PC-9 (cell line): ENCODE measurements at regions of chr5 and their contacts with region 1.

Region 1: DNA sequence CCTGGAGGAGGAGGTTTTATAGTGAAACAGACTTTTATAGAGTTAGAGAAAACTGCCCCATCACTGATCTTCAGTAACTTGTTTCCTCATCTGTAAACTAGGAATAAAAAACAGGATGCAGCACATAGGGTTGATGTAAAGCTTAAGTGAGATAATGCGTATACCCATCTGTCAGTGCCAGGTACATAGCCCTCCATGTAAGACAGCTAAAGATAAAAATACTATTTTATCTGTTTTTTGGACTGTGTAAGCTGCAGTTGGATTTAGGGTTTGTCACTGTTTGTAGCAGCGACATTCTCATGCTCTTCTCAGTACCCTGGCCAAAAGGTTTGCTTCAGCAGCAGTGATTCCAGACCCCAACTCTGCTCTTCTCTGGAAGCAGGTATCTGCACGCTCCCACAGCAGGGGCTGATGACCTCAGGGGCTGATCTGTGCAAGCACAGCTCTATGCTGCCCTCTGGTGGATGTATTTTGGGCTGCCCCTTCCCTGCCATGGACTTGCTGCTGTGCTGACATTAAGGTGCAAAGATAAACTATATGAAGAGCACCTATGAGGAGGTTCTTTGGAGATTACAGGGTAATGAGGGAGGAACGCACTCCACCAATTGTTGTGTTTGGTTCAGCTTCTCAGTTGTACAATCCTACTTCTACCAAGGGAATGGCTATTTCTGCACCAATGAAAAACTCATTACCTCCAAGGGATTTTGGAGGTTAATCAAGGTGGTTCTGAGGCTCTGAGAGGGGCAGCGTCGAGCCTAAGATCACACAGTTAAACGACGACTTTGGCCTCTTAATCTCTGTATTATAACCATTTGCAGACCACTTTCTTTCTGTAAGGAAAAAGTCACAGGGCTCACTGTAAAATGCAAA is 13.1 kb downstream of the HMHB1 start:
- DNase-seq: peak; percentile 42 to 79
- H3K4me3 ChIP-seq: no peak overlapping the region
- H3K27ac ChIP-seq: no peak overlapping the region
- H3K4me1 ChIP-seq: peaks cover 15% of the 10 kb centered on the region
- H3K27me3 ChIP-seq: no peaks in the 10 kb centered on the region
- CTCF ChIP-seq: peak; percentile 97

Region 2: DNA sequence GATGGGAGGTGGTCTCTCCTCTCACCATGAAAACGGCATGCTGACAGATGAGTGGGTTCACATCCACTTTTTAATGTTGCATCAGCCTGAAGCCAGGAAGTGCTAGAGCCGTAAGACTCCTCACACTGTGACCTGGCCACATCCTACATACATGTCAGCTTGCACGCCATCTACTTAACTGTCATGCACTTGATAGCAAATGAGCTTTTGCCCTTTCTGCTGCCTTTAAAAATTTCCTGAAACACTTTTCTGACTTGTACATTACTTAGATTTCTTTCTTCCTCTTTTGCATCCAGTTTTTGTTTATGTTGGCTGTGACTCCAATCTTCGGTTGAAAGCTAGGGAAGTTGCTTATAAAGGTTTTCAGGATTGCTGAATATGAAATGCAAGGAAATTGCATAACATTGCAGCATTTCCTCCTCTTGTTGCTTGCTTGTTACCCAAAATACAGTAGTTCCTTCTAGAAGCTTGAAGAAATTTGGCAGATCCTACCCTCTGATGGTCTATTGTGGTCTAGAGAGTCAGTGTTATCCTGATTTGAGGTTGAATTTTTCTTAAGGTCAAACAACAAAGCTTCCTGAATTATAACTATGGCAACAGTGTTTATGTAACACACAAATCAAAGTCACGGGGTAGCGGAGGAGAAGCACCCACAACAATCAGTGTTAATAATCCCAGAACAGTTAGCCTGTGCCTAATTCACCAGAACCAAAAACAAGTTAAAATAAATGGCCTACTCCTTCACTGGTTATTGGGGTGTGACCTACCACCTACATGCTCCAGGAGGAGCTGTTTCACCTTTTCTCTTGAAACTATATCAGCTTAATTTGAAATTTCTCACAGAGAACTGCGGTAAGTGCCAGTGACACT is 822.4 kb before region 1 on chr5:
- CTCF ChIA-PET with region 1: interaction called, 4 read pairs
- POLR2A ChIA-PET with region 1: no interaction called
- intact Hi-C with region 1: loop called (anchors 5 kb)
- DNase-seq: no peak
- H3K4me3 ChIP-seq: no peak overlapping the region
- H3K27ac ChIP-seq: no peak overlapping the region
- H3K4me1 ChIP-seq: no peaks in the 10 kb centered on the region
- H3K27me3 ChIP-seq: no peaks in the 10 kb centered on the region
- CTCF ChIP-seq: peak; percentile 65

Region 3: DNA sequence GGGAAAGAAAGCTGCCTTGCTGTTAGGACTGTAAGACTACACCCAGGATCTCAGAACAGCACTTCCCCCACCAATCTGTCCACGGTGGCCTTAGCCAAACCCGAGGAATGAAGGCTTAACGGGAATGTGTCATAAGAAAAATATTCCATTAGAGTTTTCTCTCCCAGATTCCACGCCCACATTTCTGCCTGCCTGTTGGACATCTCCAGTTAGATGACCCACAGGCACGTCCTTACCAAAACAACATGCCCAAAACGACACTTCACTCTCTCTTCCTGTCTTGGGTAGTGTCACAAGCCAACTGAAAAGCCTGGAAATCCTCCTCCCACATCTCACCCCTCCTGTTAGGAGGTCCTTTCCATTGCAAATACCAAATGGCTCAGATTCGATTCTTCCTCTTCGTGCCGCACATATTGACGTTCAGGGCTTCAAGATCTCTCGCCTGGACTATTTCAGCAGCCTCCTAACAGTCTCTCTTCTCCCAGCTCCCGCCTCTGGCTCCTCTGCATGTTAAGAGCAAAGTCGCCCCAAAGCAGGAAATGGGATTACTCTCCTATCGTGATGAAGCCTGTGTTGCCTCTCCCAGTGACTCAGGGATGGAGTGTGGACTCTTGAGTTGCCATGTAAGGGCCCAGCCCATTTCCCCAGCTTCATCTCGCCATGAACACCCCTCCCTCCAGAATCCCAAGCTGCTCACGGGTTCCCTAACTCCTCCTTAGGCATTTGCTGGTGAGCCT is 580.9 kb before region 1 on chr5:
- CTCF ChIA-PET with region 1: no interaction called
- POLR2A ChIA-PET with region 1: no interaction called
- intact Hi-C with region 1: loop called (anchors 1 kb)
- DNase-seq: peak; percentile 84 to 97
- H3K4me3 ChIP-seq: peak overlapping the region; percentile 43; the same call in 1 of the 2 replicates
- H3K27ac ChIP-seq: peak overlapping the region; percentile 91
- H3K4me1 ChIP-seq: peaks cover 68% of the 10 kb centered on the region
- H3K27me3 ChIP-seq: no peaks in the 10 kb centered on the region
- CTCF ChIP-seq: no peak

Region 4: DNA sequence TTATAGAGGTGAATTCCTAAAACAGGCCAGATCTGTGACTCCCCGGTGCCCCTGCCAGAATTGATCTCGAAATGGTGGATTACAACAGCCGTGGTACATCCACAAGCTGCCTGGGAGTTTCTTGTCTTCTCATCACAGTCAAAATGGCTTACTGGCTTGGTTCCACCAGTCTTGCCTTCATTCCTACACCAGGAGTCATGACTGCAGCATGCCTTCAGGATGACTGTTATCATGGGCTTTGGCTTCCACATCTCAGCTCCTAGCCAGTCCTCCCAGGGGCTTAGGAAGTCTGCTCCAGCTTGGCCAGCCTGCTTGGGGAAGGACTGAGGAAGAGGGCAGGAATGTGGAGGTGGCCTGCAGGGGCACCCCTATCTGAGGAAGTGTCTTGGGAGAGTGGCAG is 288.7 kb before region 1 on chr5:
- CTCF ChIA-PET with region 1: no interaction called
- POLR2A ChIA-PET with region 1: no interaction called
- intact Hi-C with region 1: loop called (anchors 2 kb)
- DNase-seq: peak; percentile 78 to 79
- H3K4me3 ChIP-seq: no peak overlapping the region
- H3K27ac ChIP-seq: peak overlapping the region; percentile 17
- H3K4me1 ChIP-seq: peaks cover 15% of the 10 kb centered on the region
- H3K27me3 ChIP-seq: no peaks in the 10 kb centered on the region
- CTCF ChIP-seq: no peak

Region 5: GRCh38 chr5:143693651-143694252 is 131.3 kb before region 1 on chr5:
- CTCF ChIA-PET with region 1: no interaction called
- POLR2A ChIA-PET with region 1: no interaction called
- intact Hi-C with region 1: no loop called
- DNase-seq: no peak
- H3K4me3 ChIP-seq: no peak overlapping the region
- H3K27ac ChIP-seq: no peak overlapping the region
- H3K4me1 ChIP-seq: no peaks in the 10 kb centered on the region
- H3K27me3 ChIP-seq: no peaks in the 10 kb centered on the region
- CTCF ChIP-seq: no peak

Region 6: GRCh38 chr5:143923634-143924255 is 98.7 kb after region 1 on chr5:
- CTCF ChIA-PET with region 1: interaction called, 3 read pairs
- POLR2A ChIA-PET with region 1: no interaction called
- intact Hi-C with region 1: loop called (anchors 5 kb)
- DNase-seq: no peak
- H3K4me3 ChIP-seq: no peak overlapping the region
- H3K27ac ChIP-seq: peak overlapping the region; percentile 85; the same call in 1 of the 2 replicates
- H3K4me1 ChIP-seq: peaks cover 47% of the 10 kb centered on the region
- H3K27me3 ChIP-seq: no peaks in the 10 kb centered on the region
- CTCF ChIP-seq: no peak

Region 7: GRCh38 chr5:144060598-144060997 is 235.5 kb after region 1 on chr5:
- CTCF ChIA-PET with region 1: no interaction called
- POLR2A ChIA-PET with region 1: no interaction called
- intact Hi-C with region 1: no loop called
- DNase-seq: no peak
- H3K4me3 ChIP-seq: no peak overlapping the region
- H3K27ac ChIP-seq: no peak overlapping the region
- H3K4me1 ChIP-seq: no peaks in the 10 kb centered on the region
- H3K27me3 ChIP-seq: no peaks in the 10 kb centered on the region; the same call in 1 of the 2 replicates
- CTCF ChIP-seq: no peak